A549 (cell line): ENCODE measurements at regions of chr11 and their contacts with region 1.

Region 1: GRCh38 chr11:8318336-8318935 is 54.8 kb upstream of the LMO1 start:
- DNase-seq: no peak
- ATAC-seq: peak in 1 of 2 experiments; percentile 73; a peak in 3 of 6 replicates
- H3K4me3 ChIP-seq: no peak overlapping the region
- H3K27ac ChIP-seq: no peak overlapping the region
- H3K4me1 ChIP-seq: no peaks in the 10 kb centered on the region
- CTCF ChIP-seq: 0 out of 3 replicates have a peak, but pooled peaks have one; percentile 6
- EP300 ChIP-seq: no peak
- POLR2A ChIP-seq: no peak
- RAD21 ChIP-seq: peak; percentile 20 to 21; a peak in 2 of 5 replicates

Region 2: GRCh38 chr11:8291421-8292350 is 26.8 kb before region 1 on chr11:
- CTCF ChIA-PET with region 1: no interaction called
- POLR2A ChIA-PET with region 1: no interaction called
- DNase-seq: no peak
- ATAC-seq: no peak
- H3K4me3 ChIP-seq: no peak overlapping the region
- H3K27ac ChIP-seq: no peak overlapping the region
- H3K4me1 ChIP-seq: no peaks in the 10 kb centered on the region
- CTCF ChIP-seq: no peak
- EP300 ChIP-seq: no peak
- POLR2A ChIP-seq: no peak
- RAD21 ChIP-seq: no peak

Region 3: DNA sequence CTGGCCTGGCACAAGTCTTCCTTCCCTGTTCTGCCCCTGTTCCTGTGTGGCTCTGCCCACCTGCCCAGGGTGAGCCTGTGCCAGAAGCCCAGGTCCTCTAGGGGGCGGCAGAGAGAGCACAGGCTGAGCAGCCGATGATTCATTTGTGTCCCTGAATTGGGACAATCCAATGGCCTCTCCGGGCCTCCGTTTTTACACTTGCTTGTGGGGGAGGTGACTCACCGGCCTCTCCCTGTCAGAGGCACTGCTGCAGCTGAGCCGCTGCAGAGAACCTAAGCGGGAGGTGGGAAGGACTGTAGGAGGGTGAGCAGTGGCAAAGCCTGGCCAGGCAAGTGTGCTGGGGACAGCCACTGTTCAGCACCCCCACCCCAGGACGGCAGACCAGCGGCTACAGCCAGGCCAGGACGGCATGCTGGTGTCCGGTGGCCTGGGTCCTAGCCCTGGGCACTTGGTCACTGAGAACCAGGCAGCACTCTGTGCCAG is 10.5 kb after region 1 on chr11:
- CTCF ChIA-PET with region 1: interaction called, 20 read pairs
- POLR2A ChIA-PET with region 1: no interaction called
- DNase-seq: peak; percentile 88 to 97
- ATAC-seq: peak; percentile 92 to 97
- H3K4me3 ChIP-seq: peak overlapping the region; percentile 13; the same call in 2 of the 3 replicates
- H3K27ac ChIP-seq: peak overlapping the region; percentile 57 to 83
- H3K4me1 ChIP-seq: peaks cover 10% of the 10 kb centered on the region
- CTCF ChIP-seq: peak; percentile 81
- EP300 ChIP-seq: no peak
- POLR2A ChIP-seq: no peak; the same call in 1 of the 2 replicates
- RAD21 ChIP-seq: peak; percentile 58